WTC11 (cell line): ENCODE measurements at regions of chr2 and their contacts with region 1.

Region 1: GRCh38 chr2:168336864-168337263 is 89.5 kb upstream of the STK39 start:
- DNase-seq: peak; percentile 74
- ATAC-seq: peak; percentile 100
- H3K4me3 Mint-ChIP-seq: no peak overlapping the region
- H3K27ac Mint-ChIP-seq: no peak overlapping the region
- H3K4me1 Mint-ChIP-seq: peaks cover 18% of the 10 kb centered on the region
- H3K27me3 Mint-ChIP-seq: peaks cover 2% of the 10 kb centered on the region; the same call in 1 of the 2 replicates
- CTCF ChIP-seq: peak; percentile 23; the same call in 1 of the 2 replicates

Region 2: DNA sequence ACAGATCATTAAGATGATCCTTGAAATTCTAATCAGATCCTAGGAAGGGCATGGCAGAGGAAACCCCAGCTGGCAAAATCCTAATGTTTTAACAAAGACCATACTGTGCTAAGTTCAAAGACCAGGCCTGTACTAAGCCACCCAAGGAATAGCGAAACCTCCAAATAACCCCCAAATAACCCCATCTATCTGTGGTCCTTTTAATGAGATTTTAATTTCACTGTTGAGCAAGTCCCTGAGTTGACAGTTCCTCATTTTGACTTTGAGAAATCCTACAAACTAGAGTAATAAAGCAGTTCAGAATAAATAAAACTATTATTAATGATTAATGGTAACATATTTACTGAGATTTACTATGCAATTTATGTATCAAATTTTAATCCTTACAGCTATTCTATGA is 349.3 kb before region 1 on chr2:
- CTCF ChIA-PET with region 1: no interaction called
- POLR2A ChIA-PET with region 1: no interaction called
- DNase-seq: no peak
- ATAC-seq: no peak
- H3K4me3 Mint-ChIP-seq: no peak overlapping the region
- H3K27ac Mint-ChIP-seq: no peak overlapping the region
- H3K4me1 Mint-ChIP-seq: peaks cover 17% of the 10 kb centered on the region
- H3K27me3 Mint-ChIP-seq: no peaks in the 10 kb centered on the region
- CTCF ChIP-seq: no peak

Region 3: DNA sequence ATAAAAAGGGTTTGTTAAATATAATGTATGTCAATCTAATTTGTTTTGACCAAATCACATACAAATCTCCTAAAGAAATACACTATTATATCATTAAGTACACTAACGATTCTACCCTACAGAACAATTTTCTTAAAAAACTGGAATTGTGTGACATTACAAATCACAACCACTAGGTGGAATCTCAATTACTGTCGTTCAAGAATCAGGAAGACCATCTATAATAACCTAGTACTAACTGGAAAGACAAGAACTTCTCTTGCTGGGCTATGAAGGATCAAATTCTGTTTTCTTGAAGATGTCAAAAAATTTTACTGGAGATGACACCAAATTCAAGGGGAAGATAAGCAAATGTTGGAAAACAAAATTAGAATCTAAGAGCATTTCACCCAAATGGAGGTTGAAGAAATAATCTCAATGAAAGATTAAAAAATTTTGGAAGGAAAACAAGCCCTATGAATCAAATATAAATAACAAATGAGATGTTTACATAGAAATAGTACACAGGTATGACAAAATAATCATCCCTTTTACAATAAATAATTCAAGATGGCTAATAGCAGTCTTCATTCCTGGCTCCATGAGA is 200.4 kb before region 1 on chr2:
- CTCF ChIA-PET with region 1: interaction called, 10 read pairs
- POLR2A ChIA-PET with region 1: no interaction called
- DNase-seq: no peak
- ATAC-seq: 0 out of 2 replicates have a peak, but pooled peaks have one; percentile 14
- H3K4me3 Mint-ChIP-seq: no peak overlapping the region
- H3K27ac Mint-ChIP-seq: no peak overlapping the region; the same call in 1 of the 2 replicates
- H3K4me1 Mint-ChIP-seq: peaks cover 37% of the 10 kb centered on the region
- H3K27me3 Mint-ChIP-seq: no peaks in the 10 kb centered on the region
- CTCF ChIP-seq: no peak; the same call in 1 of the 2 replicates

Region 4: DNA sequence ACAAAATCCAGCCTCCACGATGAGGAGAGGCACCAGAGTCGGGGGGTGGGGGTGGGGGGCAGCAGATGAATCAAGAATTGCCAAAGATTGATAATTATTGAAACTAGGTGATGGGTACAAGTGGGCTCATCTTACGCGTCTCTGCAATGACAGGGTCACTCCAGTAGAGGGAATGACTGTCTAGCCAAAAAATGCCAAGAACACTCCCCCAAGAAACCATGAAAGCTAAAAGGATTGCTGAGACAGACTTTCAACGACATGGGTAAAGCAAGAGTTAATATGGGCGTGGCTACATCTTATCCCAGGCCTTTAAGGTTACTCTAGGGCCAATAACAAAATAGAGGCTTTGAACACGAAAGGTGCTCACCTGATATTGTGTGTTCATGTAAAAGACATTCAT is 176.0 kb before region 1 on chr2:
- CTCF ChIA-PET with region 1: interaction called, 23 read pairs
- POLR2A ChIA-PET with region 1: no interaction called
- DNase-seq: no peak
- ATAC-seq: peak; percentile 94
- H3K4me3 Mint-ChIP-seq: no peak overlapping the region
- H3K27ac Mint-ChIP-seq: no peak overlapping the region
- H3K4me1 Mint-ChIP-seq: peaks cover 12% of the 10 kb centered on the region
- H3K27me3 Mint-ChIP-seq: no peaks in the 10 kb centered on the region
- CTCF ChIP-seq: no peak

Region 5: DNA sequence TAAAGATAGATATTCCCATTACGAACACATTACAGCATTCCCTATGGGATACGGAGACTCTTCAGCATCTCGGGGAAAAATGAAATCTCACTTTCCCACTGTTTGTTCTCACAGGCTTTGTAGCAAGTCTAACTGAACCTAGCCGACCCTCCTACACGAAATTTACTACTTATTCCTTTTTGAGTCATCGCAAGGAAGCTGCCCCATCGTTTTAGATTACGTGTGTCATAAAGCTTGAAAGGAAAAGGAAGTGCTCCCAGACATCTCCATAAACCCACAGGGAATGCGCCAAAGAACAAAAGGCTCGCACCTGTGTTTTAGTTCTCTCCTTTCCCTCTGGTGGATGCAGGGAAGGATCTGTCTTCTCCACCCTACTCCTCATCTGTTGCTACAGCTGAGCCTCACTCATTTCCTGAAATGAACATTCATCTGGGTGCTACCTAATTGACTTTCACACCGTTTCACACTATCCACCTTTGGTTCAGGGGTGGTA is 13.3 kb before region 1 on chr2:
- CTCF ChIA-PET with region 1: interaction called, 11 read pairs
- POLR2A ChIA-PET with region 1: no interaction called
- DNase-seq: no peak
- ATAC-seq: peak; percentile 32
- H3K4me3 Mint-ChIP-seq: no peak overlapping the region
- H3K27ac Mint-ChIP-seq: no peak overlapping the region
- H3K4me1 Mint-ChIP-seq: peaks cover 34% of the 10 kb centered on the region
- H3K27me3 Mint-ChIP-seq: no peaks in the 10 kb centered on the region
- CTCF ChIP-seq: no peak